ENCODE measurements at regions of chr2 and their contacts with region 1.

Region 1: DNA sequence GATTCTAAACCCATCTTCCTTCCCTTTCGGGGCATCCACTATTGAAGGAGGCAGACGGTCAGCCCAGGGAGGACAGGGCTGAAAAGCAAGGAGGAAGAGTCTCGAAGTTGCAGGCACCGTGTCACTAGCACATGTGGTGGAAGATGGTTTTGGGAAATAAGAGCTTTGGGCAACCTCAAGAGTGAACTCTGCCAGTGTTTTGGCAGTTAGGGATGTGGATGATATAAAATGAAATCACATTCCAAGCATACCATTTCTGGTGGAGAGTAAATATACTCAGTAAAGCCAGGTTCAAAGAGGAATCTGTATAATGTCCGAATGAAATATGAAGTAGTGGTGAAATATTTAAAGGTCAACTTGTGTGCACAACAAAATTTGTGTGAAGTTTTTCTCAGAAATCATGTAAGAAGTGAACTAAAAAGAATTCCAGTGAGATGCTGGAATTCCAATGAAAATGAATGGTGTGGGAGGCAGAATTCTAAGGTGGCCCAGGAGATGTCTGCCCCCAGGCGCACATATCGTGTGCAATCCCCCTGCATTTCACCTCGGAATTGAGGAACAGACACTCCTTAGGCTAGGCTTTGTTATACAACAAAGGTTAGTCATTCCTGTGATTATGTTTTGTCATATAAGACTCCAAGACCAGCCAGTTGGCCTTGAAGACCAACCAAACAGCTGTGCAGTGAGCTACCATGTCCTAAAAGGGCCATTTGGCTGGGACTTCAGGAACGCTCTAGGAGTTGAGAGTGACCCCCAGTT is 147.1 kb downstream of the SH3BP4 start:
- DNase-seq: peak; percentile 70
- ATAC-seq: peak; percentile 90
- H3K4me3 ChIP-seq: no peak overlapping the region; the same call in 1 of the 2 replicates
- H3K27ac ChIP-seq: peak overlapping the region; percentile 24
- H3K4me1 ChIP-seq: peaks cover 24% of the 10 kb centered on the region
- H3K27me3 ChIP-seq: no peaks in the 10 kb centered on the region
- CTCF ChIP-seq: no peak

Region 2: GRCh38 chr2:234981197-234982117 is 117.5 kb before region 1 on chr2:
- CTCF ChIA-PET with region 1: no interaction called
- POLR2A ChIA-PET with region 1: no interaction called
- intact Hi-C with region 1: loop called (anchors 10 kb)
- DNase-seq: peak; percentile 94
- ATAC-seq: peak; percentile 79
- H3K4me3 ChIP-seq: peak overlapping the region; percentile 67
- H3K27ac ChIP-seq: peak overlapping the region; percentile 96
- H3K4me1 ChIP-seq: peaks cover 53% of the 10 kb centered on the region
- H3K27me3 ChIP-seq: no peaks in the 10 kb centered on the region
- CTCF ChIP-seq: peak; percentile 26; the same call in 1 of the 2 replicates